Activated B cell treated with CpG ODN at 0.5 μM for 24 hours (primary cell): ENCODE measurements at regions of chr10 and their contacts with region 1.

Region 1: GRCh38 chr10:90885176-90885575 is 13.4 kb downstream of the RPP30 start:
- DNase-seq: no peak
- ATAC-seq: no peak
- H3K4me3 Mint-ChIP-seq: no peak overlapping the region
- H3K27ac Mint-ChIP-seq: no peak overlapping the region
- H3K4me1 Mint-ChIP-seq: no peaks in the 10 kb centered on the region
- H3K27me3 Mint-ChIP-seq: no peaks in the 10 kb centered on the region
- CTCF ChIP-seq: no peak

Region 2: DNA sequence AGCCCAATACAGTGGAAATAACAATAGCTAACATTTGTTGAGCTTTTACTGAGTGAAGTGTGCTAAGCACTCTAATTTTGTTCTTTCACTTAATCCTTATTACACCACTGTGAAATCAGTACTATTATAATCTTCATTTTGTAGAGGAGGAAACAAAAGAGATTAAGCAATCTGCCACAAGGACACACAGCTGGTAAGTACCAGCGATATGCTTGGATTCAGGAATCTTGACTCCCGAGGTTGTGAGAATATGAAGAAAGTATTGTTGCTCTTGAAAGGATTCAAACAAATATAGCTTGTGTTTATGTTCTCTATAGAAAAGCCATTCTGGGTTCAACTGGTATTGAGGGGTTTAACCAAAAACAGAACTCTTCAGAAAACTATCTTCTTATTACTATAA is 431.3 kb after region 1 on chr10:
- CTCF ChIA-PET with region 1: no interaction called
- POLR2A ChIA-PET with region 1: no interaction called
- intact Hi-C with region 1: no loop called
- DNase-seq: no peak
- ATAC-seq: no peak
- H3K4me3 Mint-ChIP-seq: no peak overlapping the region
- H3K27ac Mint-ChIP-seq: no peak overlapping the region
- H3K4me1 Mint-ChIP-seq: no peaks in the 10 kb centered on the region
- H3K27me3 Mint-ChIP-seq: peaks cover 4% of the 10 kb centered on the region
- CTCF ChIP-seq: no peak

Region 3: GRCh38 chr10:91420868-91421267 is 535.7 kb after region 1 on chr10:
- CTCF ChIA-PET with region 1: no interaction called
- POLR2A ChIA-PET with region 1: no interaction called
- intact Hi-C with region 1: no loop called
- DNase-seq: no peak
- ATAC-seq: no peak
- H3K4me3 Mint-ChIP-seq: no peak overlapping the region
- H3K27ac Mint-ChIP-seq: no peak overlapping the region
- H3K4me1 Mint-ChIP-seq: peaks cover 2% of the 10 kb centered on the region
- H3K27me3 Mint-ChIP-seq: no peaks in the 10 kb centered on the region
- CTCF ChIP-seq: no peak

Region 4: DNA sequence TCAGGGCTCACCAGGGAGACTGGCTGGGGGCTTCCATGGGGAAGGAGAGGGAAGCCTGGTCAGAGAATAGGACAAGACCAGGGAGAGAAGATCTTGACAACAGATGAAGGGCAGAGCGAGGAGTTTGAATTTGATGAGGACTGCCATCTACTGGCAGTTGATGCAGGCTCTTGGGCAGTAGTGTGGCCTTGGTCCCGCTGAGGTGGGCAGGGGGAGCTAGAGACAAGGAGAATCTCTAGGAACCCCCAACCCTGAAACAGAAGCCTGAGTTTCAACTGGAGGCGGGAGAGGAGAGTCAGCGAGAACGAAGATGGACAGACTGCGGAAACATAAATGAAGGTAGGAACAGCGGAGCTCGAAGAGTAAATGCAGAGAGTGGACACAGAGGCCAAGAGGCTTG is 666.7 kb after region 1 on chr10:
- CTCF ChIA-PET with region 1: no interaction called
- POLR2A ChIA-PET with region 1: no interaction called
- intact Hi-C with region 1: loop called (anchors 5 kb)
- DNase-seq: no peak
- ATAC-seq: no peak
- H3K4me3 Mint-ChIP-seq: no peak overlapping the region
- H3K27ac Mint-ChIP-seq: no peak overlapping the region
- H3K4me1 Mint-ChIP-seq: no peaks in the 10 kb centered on the region
- H3K27me3 Mint-ChIP-seq: no peaks in the 10 kb centered on the region
- CTCF ChIP-seq: no peak

Region 5: GRCh38 chr10:91694170-91694794 is 809.1 kb after region 1 on chr10:
- CTCF ChIA-PET with region 1: no interaction called
- POLR2A ChIA-PET with region 1: no interaction called
- intact Hi-C with region 1: loop called (anchors 1 kb)
- DNase-seq: no peak
- ATAC-seq: no peak
- H3K4me3 Mint-ChIP-seq: no peak overlapping the region
- H3K27ac Mint-ChIP-seq: no peak overlapping the region
- H3K4me1 Mint-ChIP-seq: no peaks in the 10 kb centered on the region
- H3K27me3 Mint-ChIP-seq: peaks cover 3% of the 10 kb centered on the region
- CTCF ChIP-seq: no peak